Psoas muscle (tissue), 8 donors: ENCODE measurements at regions of chr7 and their contacts with region 1.

Region 1: DNA sequence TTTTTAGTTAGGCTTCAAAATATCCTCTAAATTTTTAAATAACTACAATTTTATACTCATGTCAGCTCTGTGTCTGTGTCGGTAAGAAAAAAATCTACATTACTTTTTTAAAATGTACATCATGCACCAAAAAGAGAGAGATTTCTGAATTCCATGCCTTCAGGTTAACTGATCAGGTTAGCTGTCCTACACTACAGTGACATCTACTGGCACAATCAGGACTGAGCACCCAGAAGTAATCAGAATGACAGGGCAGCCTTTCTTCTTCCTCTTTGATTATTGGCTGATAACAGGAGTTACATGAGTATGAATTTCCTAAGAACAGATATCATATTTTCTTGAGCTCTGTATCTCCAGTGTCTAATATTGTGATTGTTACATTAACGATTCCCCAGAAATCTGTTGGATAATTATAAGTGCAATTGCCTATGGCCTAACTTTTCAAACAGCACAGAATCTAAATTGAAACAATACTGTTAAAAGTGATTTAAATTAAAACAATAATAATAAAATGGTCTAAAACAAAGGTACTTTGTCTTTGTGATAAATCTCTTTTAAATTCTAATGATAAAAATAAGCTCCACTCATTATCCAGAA is 41.8 kb upstream of the HYCC1 start:
- DNase-seq: no peak
- ATAC-seq: peak; percentile 76 to 90 (median 85)
- H3K4me3 ChIP-seq: no peak overlapping the region
- H3K27ac ChIP-seq: no peak overlapping the region
- H3K4me1 ChIP-seq: no peaks in the 10 kb centered on the region
- H3K27me3 ChIP-seq: no peaks in the 10 kb centered on the region
- CTCF ChIP-seq: peak; percentile 93

Region 2: DNA sequence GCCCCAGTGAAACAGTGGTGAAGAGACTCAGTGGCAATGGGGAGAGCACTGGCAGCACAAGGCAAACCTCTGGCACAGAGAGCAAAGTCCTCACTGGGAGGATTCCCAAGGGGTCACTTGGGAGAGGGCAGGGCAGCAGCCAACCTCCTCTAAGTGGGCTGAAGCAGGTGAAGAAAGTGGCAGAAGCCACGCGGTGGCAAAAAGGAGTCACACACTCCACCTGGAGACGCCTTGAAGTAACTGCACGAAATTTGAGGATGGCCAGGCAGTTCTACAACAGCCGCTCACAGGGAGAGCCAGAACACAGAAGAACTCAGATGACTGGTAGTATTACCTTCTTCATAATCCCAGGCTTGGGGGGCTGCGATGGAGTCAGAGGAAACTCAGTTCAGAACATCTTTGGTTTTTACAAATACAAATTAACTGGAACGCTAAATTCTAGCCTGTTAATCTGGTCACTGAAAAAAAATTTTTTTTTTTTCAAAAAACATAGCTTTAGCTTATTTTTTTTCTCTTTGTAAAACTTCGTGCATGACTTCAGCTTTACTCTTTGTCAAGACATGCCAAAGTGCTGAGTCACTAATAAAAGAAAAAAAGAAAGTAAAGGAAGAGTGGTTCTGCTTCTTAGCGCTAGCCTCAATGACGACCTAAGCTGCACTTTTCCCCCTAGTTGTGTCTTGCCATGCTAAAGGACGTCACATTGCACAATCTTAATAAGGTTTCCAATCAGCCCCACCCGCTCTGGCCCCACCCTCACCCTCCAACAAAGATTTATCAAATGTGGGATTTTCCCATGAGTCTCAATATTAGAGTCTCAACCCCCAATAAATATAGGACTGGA is 329.1 kb before region 1 on chr7:
- intact Hi-C with region 1: loop called (anchors 5 to 10 kb)
- DNase-seq: peak; percentile 35 to 72
- ATAC-seq: peak; percentile 74 to 89 (median 85)
- H3K4me3 ChIP-seq: peak overlapping the region; percentile 60
- H3K27ac ChIP-seq: peak overlapping the region; percentile 65
- H3K4me1 ChIP-seq: peaks cover 37% of the 10 kb centered on the region
- H3K27me3 ChIP-seq: no peaks in the 10 kb centered on the region
- CTCF ChIP-seq: peak; percentile 68

Region 3: DNA sequence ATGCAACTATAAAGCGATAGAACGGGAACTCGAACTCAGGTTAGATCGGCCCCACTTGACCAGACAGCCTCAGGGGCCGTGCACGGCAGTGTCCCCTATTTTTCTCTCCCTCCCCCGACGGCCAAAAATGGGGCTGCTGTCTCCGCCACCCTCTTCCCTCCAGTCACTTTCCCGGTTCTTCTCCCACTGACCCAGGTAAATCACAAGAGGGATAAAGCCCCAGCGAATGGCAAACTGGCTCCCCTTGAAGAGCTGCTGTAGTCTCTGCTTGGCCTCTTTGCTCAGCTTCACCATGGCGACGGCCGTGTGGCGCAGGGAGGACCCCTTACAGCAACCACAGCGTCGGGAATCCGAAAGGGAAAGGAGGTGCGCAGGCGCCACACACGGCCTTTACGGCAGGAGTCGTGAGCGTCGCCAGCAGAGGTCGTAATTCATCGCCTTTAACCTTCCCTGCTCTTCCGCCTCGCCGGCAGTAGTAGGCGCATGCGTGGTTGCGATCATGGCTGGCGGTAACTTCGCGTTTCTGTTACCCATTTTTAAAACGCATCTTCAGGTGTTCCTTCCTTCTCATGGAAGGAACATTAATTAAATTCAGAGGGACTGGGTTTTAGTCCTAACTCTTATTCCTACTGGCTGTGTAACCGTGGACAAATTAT is 233.1 kb before region 1 on chr7 and contains the start of gene TOMM7:
- intact Hi-C with region 1: loop called in 1 of 2 experiments (anchors 5 kb)
- DNase-seq: peak; percentile 90 to 96
- ATAC-seq: peak; percentile 96 to 98 (median 98)
- H3K4me3 ChIP-seq: peak within 1 kb of the TSS; percentile 97
- H3K27ac ChIP-seq: peak within 1 kb of the TSS; percentile 92
- H3K4me1 ChIP-seq: peaks cover 20% of the 10 kb centered on the region
- H3K27me3 ChIP-seq: no peaks in the 10 kb centered on the region
- CTCF ChIP-seq: peak; percentile 55
- total RNA-seq, gene TOMM7: 465 to 704 (median 639) TPM

Region 4: DNA sequence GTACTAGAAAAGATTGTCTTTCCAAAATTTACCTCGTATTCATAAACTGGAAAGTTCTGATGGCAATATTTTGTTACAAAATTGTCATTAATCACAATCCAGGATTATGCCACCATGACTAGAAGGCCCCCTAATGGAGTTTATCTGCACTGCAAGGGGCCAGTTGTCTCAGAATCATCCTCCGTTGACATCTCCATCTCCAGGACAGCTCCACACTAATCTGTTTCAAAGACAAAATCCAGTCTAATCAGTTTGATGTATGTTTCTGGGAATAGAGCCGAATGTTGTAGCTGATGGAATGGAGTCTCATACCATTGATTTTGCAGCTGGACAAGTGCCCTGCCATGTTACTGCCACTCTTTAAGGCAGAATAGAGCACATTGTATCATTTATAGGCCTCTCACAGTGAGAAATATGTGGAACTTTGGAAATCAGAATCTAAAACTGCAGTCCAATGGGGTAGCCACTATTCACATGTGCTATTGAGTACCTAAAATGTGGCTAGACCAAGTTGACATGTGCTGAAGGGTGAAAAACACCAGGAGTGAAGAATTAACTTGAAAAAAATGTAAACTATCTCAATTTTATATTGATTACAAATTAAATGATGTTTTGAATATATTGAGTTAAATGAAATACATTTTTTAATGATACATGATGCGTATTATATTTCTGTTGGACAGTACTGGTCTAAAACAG is 194.7 kb before region 1 on chr7:
- intact Hi-C with region 1: loop called in 1 of 2 experiments (anchors 5 kb)
- DNase-seq: no peak
- ATAC-seq: peak; percentile 45 to 71 (median 53)
- H3K4me3 ChIP-seq: no peak overlapping the region
- H3K27ac ChIP-seq: peak overlapping the region; percentile 97
- H3K4me1 ChIP-seq: peaks cover 30% of the 10 kb centered on the region
- H3K27me3 ChIP-seq: no peaks in the 10 kb centered on the region
- CTCF ChIP-seq: peak; percentile 68